Activated CD4-positive, alpha-beta memory T cell treated with anti-CD3 and anti-CD28 coated beads for 36 hours (primary cell): ENCODE measurements at regions of chr3 and their contacts with region 1.

Region 1: GRCh38 chr3:42080452-42080891 is 10.7 kb upstream of the TRAK1 start:
- DNase-seq: peak; percentile 51
- H3K4me3 Mint-ChIP-seq: no peak overlapping the region
- H3K27ac Mint-ChIP-seq: peak overlapping the region; percentile 80
- H3K4me1 Mint-ChIP-seq: peaks cover 59% of the 10 kb centered on the region
- H3K27me3 Mint-ChIP-seq: no peaks in the 10 kb centered on the region

Region 2: DNA sequence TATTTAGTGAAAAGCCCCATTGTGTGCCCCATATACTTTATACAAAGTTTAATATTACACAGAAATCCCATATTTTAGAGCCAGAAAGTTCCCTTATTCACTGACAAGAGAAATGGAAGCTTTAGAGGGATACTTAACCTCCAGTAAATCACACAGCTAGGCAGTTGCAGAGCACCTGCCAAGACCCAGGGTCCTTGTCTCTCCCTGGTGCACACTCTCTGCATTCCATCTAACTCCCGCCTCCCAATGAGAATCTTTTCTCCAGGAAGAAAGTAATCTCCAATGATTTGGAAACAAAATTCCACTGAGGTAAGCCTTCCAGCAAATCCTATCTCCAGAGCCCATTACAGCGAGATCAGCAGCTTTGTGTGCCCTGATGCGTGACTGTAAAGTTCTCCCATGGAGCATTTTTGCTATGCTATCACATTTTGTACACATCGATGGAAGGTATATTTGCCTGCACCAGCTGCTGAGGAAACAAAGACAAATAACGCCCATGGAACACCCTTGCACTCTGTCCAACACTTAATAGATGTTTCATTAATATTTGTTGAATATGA is 160.0 kb before region 1 on chr3:
- CTCF ChIA-PET with region 1: no interaction called
- POLR2A ChIA-PET with region 1: no interaction called
- intact Hi-C with region 1: no loop called
- DNase-seq: no peak
- H3K4me3 Mint-ChIP-seq: no peak overlapping the region
- H3K27ac Mint-ChIP-seq: no peak overlapping the region
- H3K4me1 Mint-ChIP-seq: no peaks in the 10 kb centered on the region
- H3K27me3 Mint-ChIP-seq: no peaks in the 10 kb centered on the region

Region 3: DNA sequence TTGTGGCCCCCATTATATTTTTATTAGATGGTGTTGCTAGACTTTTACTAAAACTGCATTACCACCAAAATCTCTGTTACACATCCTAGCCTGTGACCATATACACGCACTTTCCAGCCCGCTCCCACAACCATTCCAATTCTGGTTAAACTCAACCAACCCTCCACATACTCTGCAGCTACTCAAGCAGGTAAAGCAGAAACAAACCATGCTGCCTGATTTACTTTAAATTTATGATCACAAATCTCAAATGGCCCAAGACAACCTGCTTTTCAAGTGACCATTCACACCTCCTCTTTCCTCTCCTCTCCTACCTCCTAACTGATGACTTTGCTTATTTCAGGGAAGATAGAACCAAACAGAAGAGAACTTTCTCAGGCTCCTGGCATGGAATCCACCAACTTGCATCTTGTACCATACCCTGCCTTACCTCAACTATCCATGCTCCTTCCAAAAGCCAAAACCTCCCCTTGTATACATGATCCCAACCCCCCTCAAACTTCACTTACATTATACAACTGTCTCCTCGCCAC is 137.1 kb before region 1 on chr3:
- CTCF ChIA-PET with region 1: no interaction called
- POLR2A ChIA-PET with region 1: no interaction called
- intact Hi-C with region 1: no loop called
- DNase-seq: no peak
- H3K4me3 Mint-ChIP-seq: no peak overlapping the region
- H3K27ac Mint-ChIP-seq: no peak overlapping the region
- H3K4me1 Mint-ChIP-seq: no peaks in the 10 kb centered on the region
- H3K27me3 Mint-ChIP-seq: no peaks in the 10 kb centered on the region

Region 4: DNA sequence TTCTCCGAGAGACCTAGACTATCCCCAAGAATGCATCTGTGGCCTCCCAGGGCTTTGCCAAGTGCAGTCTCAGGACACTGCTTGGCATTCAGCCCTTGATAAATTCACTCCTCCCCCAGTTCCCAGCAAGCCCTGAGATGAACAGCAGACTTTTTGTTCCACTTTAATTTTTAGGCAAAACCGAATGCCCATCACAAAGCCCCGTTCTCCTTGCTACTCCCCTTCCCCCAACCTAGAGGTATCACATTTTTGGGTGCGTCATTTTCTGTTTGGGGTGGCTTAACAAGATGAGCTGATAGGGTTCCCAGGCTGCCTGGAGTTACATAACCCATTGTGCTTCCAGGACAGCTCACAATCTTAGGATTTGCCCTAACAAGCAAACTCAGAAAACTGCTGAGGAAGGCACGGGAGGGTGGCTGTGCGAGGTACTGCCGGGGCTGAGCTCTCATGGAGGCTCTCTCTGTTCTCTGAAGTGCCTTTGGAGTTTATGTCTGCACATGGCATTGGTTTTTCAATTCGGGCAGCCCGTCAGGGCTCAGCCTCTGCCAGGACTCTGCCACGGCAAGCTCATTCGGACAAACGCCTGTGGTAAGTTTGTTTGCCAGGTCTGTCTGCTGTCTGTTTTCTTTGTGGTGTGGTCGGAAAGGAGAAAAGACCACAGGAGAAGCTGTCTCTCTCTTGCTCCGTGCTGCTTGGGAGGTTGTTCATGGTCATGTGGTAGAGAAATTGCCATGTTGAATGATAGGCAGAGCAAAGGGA is 10.7 kb after region 1 on chr3 and contains the start of gene TRAK1:
- CTCF ChIA-PET with region 1: interaction called, 4 read pairs
- POLR2A ChIA-PET with region 1: interaction called, 3 read pairs
- intact Hi-C with region 1: loop called (anchors 1 kb)
- DNase-seq: no peak
- H3K4me3 Mint-ChIP-seq: no peak within 1 kb of the TSS
- H3K27ac Mint-ChIP-seq: no peak within 1 kb of the TSS
- H3K4me1 Mint-ChIP-seq: peaks cover 51% of the 10 kb centered on the region
- H3K27me3 Mint-ChIP-seq: no peaks in the 10 kb centered on the region
- total RNA-seq, gene TRAK1: 19.0 to 19.3 TPM

Region 5: GRCh38 chr3:42129014-42129953 is 48.8 kb after region 1 on chr3:
- CTCF ChIA-PET with region 1: no interaction called
- POLR2A ChIA-PET with region 1: no interaction called
- intact Hi-C with region 1: no loop called
- DNase-seq: no peak
- H3K4me3 Mint-ChIP-seq: no peak overlapping the region
- H3K27ac Mint-ChIP-seq: no peak overlapping the region
- H3K4me1 Mint-ChIP-seq: no peaks in the 10 kb centered on the region
- H3K27me3 Mint-ChIP-seq: no peaks in the 10 kb centered on the region

Region 6: DNA sequence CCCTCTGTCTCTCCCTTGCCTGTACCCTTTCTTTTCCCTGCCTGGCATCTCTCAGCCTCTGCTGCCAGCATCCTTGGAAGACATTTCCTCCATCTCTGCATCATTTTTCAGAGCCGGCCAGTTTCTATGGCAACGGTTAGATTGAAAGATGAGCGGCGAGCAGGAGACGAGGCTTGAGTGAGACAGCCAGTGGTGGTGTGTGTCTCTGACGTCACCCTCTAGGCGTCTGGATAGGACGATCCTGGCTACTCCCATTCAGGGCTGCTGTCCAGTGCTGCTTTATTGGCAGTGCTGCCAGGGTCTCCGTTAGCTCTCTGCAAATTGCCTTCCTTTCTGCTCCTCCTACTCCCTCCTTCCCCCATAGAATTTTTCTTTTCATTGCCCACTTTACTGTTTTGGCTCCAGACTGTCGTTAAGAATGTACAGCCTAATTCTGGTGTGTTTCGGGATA is 68.5 kb after region 1 on chr3:
- CTCF ChIA-PET with region 1: no interaction called
- POLR2A ChIA-PET with region 1: no interaction called
- intact Hi-C with region 1: no loop called
- DNase-seq: no peak
- H3K4me3 Mint-ChIP-seq: no peak overlapping the region
- H3K27ac Mint-ChIP-seq: no peak overlapping the region
- H3K4me1 Mint-ChIP-seq: peaks cover 6% of the 10 kb centered on the region
- H3K27me3 Mint-ChIP-seq: no peaks in the 10 kb centered on the region